Activated CD8-positive, alpha-beta memory T cell treated with anti-CD3 and anti-CD28 coated beads, Interleukin-2, amount 10 ng/mL, durations not matched to agents 7 days and 5 days (primary cell): ENCODE measurements at regions of chr1 and their contacts with region 1.

Region 1: GRCh38 chr1:117895482-117896114 is 33.8 kb downstream of the GDAP2 start:
- DNase-seq: peak; percentile 75
- ATAC-seq: peak; percentile 80
- H3K4me3 Mint-ChIP-seq: no peak overlapping the region
- H3K27ac Mint-ChIP-seq: no peak overlapping the region
- H3K4me1 Mint-ChIP-seq: peaks cover 8% of the 10 kb centered on the region
- H3K27me3 Mint-ChIP-seq: no peaks in the 10 kb centered on the region

Region 2: DNA sequence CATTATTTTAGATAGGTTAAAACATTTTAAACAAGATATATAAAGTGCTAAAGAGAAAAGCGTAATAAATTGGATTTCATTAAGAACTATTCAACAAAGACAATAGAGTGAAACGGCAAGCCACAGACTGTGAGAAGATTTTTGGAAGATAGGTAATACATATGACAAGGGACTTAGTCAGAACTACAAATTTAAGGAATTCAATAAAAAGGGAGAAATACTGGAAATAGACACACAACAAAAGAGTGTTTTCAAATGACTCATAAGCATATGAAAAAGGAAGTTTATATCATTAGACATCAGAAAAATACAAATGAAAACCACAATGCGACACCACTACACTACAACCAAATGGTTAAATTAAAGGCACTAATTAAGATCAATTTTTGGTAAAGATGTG is 56.7 kb before region 1 on chr1:
- CTCF ChIA-PET with region 1: no interaction called
- DNase-seq: no peak
- ATAC-seq: no peak
- H3K4me3 Mint-ChIP-seq: no peak overlapping the region
- H3K27ac Mint-ChIP-seq: no peak overlapping the region
- H3K4me1 Mint-ChIP-seq: no peaks in the 10 kb centered on the region
- H3K27me3 Mint-ChIP-seq: no peaks in the 10 kb centered on the region

Region 3: DNA sequence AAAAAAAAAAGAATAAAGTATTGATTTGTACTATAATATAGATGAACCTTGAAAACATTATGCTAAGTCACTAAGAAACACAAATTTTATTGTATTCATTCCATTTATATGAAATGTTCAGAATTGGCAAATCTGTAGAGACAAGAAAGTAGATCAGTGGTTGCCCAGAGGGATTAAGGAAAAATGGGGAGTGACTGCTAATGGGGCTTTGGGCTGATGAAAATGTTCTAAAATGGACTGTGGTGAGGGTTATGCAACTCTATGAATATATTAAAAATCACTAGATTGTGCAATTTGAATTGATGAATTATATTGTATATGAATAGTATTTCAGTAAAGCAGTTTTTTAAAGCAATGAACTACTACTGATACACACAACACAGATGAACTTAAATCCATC is 23.8 kb after region 1 on chr1:
- CTCF ChIA-PET with region 1: interaction called, 13 read pairs
- DNase-seq: no peak
- ATAC-seq: no peak
- H3K4me3 Mint-ChIP-seq: no peak overlapping the region
- H3K27ac Mint-ChIP-seq: no peak overlapping the region
- H3K4me1 Mint-ChIP-seq: no peaks in the 10 kb centered on the region
- H3K27me3 Mint-ChIP-seq: no peaks in the 10 kb centered on the region

Region 4: GRCh38 chr1:117929173-117929989 is 33.8 kb after region 1 on chr1 and contains the starts of genes GDAP2 and WDR3:
- CTCF ChIA-PET with region 1: interaction called, 16 read pairs
- DNase-seq: peak; percentile 98
- ATAC-seq: peak; percentile 94
- H3K4me3 Mint-ChIP-seq: peak within 1 kb of the TSS; percentile 88
- H3K27ac Mint-ChIP-seq: peak within 1 kb of the TSS; percentile 87
- H3K4me1 Mint-ChIP-seq: peaks cover 46% of the 10 kb centered on the region
- H3K27me3 Mint-ChIP-seq: no peaks in the 10 kb centered on the region
- total RNA-seq, gene GDAP2: 21.9 to 22.5 TPM
- total RNA-seq, gene WDR3: 27.8 to 38.5 TPM